Gastrocnemius medialis (tissue), 4 donors: ENCODE measurements at regions of chr10 and their contacts with region 1.

Region 1: GRCh38 chr10:102678842-102679289 is 34.6 kb downstream of the TRIM8 start:
- DNase-seq: peak; percentile 39 to 58
- ATAC-seq: peak; percentile 51 to 60
- H3K4me3 ChIP-seq: peak overlapping the region in 1 of 4 donors; percentile 14
- H3K27ac ChIP-seq: peak overlapping the region in 2 of 4 donors; percentile 1 to 28
- H3K4me1 ChIP-seq: peaks cover 25 to 40% of the 10 kb centered on the region in 2 donors
- H3K27me3 ChIP-seq: no peaks in the 10 kb centered on the region
- CTCF ChIP-seq: peak; percentile 32 to 73 (median 56)
- POLR2A ChIP-seq: no peak

Region 2: GRCh38 chr10:102713814-102714620 is 35.2 kb after region 1 on chr10 and contains the start of gene ARL3:
- in situ Hi-C with region 1: no loop called
- intact Hi-C with region 1: loop called (anchors 2 kb)
- DNase-seq: peak; percentile 96 to 97
- ATAC-seq: peak; percentile 88
- H3K4me3 ChIP-seq: peak within 1 kb of the TSS; percentile 74 to 99 (median 91)
- H3K27ac ChIP-seq: peak within 1 kb of the TSS; percentile 83 to 89 (median 86)
- H3K4me1 ChIP-seq: peaks cover 26 to 28% of the 10 kb centered on the region in 2 donors
- H3K27me3 ChIP-seq: no peaks in the 10 kb centered on the region
- CTCF ChIP-seq: peak; percentile 48 to 66 (median 61)
- POLR2A ChIP-seq: peak; percentile 58 to 70
- total RNA-seq, gene ARL3: 1.0 to 2.4 (median 1.5) TPM